ENCODE measurements at regions of chr1 and their contacts with region 1.

Region 1: DNA sequence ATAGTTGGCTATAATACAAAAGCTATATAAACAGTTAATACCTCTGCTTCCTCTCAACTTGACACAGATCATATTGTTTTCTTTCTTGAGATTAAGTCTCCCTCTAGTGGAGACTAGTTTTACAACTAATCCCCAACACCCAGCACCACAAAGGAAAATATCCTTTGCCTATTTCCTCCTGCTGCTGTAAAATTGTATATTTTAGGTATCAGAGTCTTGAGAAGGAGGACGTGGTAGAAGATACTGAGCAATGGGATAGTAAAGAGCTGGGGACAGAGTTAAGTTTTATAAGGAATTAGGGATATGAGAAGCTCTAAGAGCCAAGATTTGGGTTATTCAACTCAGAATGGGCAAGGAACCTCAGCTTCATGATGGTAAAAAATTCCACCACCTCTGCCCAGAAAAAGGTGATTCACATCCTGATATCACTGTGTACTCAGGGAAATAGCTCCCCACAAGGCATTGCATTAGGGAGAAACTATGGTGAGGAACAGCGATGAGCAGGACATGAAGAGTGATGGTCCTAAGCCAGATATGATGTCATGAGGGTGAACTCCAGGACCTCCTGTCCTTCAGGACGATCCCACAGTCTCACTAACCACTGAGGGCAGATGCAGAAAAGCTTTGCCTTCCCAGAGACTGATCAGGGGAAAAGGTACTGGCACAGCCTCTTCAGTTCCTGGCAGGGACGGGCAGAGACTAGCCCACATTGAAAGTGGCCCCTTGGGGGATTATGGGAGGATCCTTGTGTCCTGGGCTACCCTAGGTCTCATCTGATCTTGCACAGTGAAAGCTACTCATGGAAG is 14.7 kb upstream of the CFAP126 start:
- DNase-seq: peak; percentile 45
- ATAC-seq: peak; percentile 86
- H3K4me3 ChIP-seq: no peak overlapping the region
- H3K27ac ChIP-seq: no peak overlapping the region
- H3K4me1 ChIP-seq: peaks cover 5 to 14% of the 10 kb centered on the region in 2 experiments; a peak in 3 of 4 replicates
- H3K27me3 ChIP-seq: no peaks in the 10 kb centered on the region
- CTCF ChIP-seq: peak; percentile 56 to 85 (median 72)
- POLR2A ChIP-seq: no peak
- RAD21 ChIP-seq: peak; percentile 84

Region 2: GRCh38 chr1:160637821-160638539 is 744.4 kb before region 1 on chr1:
- CTCF ChIA-PET with region 1: no interaction called
- POLR2A ChIA-PET with region 1: no interaction called
- RAD21 ChIA-PET with region 1: no interaction called
- intact Hi-C with region 1: no loop called
- DNase-seq: no peak
- ATAC-seq: no peak
- H3K4me3 ChIP-seq: no peak overlapping the region
- H3K27ac ChIP-seq: no peak overlapping the region
- H3K4me1 ChIP-seq: no peaks in the 10 kb centered on the region
- H3K27me3 ChIP-seq: no peaks in the 10 kb centered on the region
- CTCF ChIP-seq: no peak
- POLR2A ChIP-seq: no peak
- RAD21 ChIP-seq: no peak

Region 3: DNA sequence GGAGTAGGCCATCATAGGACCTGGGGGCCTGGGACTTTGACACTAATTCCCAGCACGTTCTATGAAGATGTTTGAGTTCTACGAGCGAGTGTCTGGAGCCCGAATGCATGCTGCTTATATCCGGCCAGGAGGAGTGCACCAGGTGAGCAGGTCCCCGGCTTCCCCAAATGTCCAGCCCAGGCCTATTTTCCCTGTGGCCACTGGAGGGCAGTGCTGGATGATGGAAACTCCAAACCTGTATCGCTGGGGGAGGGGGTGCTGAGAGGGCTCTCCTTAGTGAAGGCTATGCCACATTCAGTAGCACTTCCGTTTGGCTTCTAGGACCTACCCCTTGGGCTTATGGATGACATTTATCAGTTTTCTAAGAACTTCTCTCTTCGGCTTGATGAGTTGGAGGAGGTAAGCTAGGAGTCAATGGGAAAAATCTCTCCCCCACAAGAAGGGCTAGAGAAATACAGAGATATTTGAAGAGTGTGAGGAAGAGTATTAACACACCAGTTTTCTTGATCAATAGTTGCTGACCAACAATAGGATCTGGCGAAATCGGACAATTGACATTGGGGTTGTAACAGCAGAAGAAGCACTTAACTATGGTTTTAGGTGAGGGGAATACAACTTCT is 172.5 kb before region 1 on chr1:
- CTCF ChIA-PET with region 1: interaction called, 3 read pairs
- POLR2A ChIA-PET with region 1: no interaction called
- RAD21 ChIA-PET with region 1: no interaction called
- intact Hi-C with region 1: loop called (anchors 1 kb)
- DNase-seq: peak; percentile 61
- ATAC-seq: peak; percentile 99
- H3K4me3 ChIP-seq: no peak overlapping the region
- H3K27ac ChIP-seq: no peak overlapping the region
- H3K4me1 ChIP-seq: peaks cover 0 to 10% of the 10 kb centered on the region in 2 experiments; a peak in 2 of 4 replicates
- H3K27me3 ChIP-seq: no peaks in the 10 kb centered on the region
- CTCF ChIP-seq: peak; percentile 82 to 96 (median 94)
- POLR2A ChIP-seq: no peak
- RAD21 ChIP-seq: peak; percentile 87